ENCODE measurements at regions of chr11 and their contacts with region 1.

Region 1: GRCh38 chr11:6362873-6363678 is 27.2 kb upstream of the SMPD1 start:
- DNase-seq: peak; percentile 54
- H3K4me3 ChIP-seq: no peak overlapping the region
- H3K27ac ChIP-seq: no peak overlapping the region
- H3K27me3 ChIP-seq: no peaks in the 10 kb centered on the region
- CTCF ChIP-seq: peak; percentile 98

Region 2: GRCh38 chr11:5878564-5878963 is 484.5 kb before region 1 on chr11:
- CTCF ChIA-PET with region 1: no interaction called
- POLR2A ChIA-PET with region 1: no interaction called
- DNase-seq: no peak
- H3K4me3 ChIP-seq: no peak overlapping the region
- H3K27ac ChIP-seq: no peak overlapping the region
- H3K27me3 ChIP-seq: no peaks in the 10 kb centered on the region
- CTCF ChIP-seq: no peak

Region 3: GRCh38 chr11:5992604-5993251 is 370.3 kb before region 1 on chr11:
- CTCF ChIA-PET with region 1: interaction called, 30 read pairs
- POLR2A ChIA-PET with region 1: interaction called, 3 read pairs
- DNase-seq: no peak
- H3K4me3 ChIP-seq: no peak overlapping the region
- H3K27ac ChIP-seq: no peak overlapping the region
- H3K27me3 ChIP-seq: no peaks in the 10 kb centered on the region
- CTCF ChIP-seq: peak; percentile 48

Region 4: GRCh38 chr11:6240781-6241180 is 122.3 kb before region 1 on chr11:
- CTCF ChIA-PET with region 1: interaction called, 24 read pairs
- POLR2A ChIA-PET with region 1: no interaction called
- DNase-seq: no peak
- H3K4me3 ChIP-seq: no peak overlapping the region
- H3K27ac ChIP-seq: no peak overlapping the region
- H3K27me3 ChIP-seq: peaks cover 17% of the 10 kb centered on the region
- CTCF ChIP-seq: no peak

Region 5: DNA sequence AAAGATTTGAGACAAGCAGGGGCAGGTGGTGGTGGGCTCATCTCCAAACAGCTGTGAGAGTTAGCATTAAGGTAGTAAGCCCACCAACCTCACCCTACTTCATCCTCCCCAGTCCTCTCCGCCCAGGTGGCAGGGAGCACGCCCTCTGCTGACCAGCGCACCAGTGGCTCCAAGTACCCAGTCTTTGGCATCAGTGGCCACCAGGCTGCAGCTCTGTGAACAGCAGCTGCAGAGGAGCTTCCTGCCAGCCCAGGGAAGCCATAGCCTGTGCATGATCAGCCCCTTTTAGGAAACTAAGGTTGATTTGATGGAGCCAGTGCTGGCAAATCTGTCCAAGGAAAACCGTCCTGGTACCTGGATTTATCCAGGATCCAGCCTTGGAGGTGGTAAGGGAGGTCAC is 64.5 kb before region 1 on chr11:
- CTCF ChIA-PET with region 1: interaction called, 38 read pairs
- POLR2A ChIA-PET with region 1: no interaction called
- DNase-seq: no peak
- H3K4me3 ChIP-seq: no peak overlapping the region
- H3K27ac ChIP-seq: no peak overlapping the region
- H3K27me3 ChIP-seq: no peaks in the 10 kb centered on the region
- CTCF ChIP-seq: peak; percentile 53

Region 6: GRCh38 chr11:6321961-6322362 is 41.1 kb before region 1 on chr11:
- CTCF ChIA-PET with region 1: interaction called, 137 read pairs
- POLR2A ChIA-PET with region 1: interaction called, 8 read pairs
- DNase-seq: no peak
- H3K4me3 ChIP-seq: no peak overlapping the region
- H3K27ac ChIP-seq: peak overlapping the region; percentile 100
- H3K27me3 ChIP-seq: no peaks in the 10 kb centered on the region
- CTCF ChIP-seq: no peak

Region 7: DNA sequence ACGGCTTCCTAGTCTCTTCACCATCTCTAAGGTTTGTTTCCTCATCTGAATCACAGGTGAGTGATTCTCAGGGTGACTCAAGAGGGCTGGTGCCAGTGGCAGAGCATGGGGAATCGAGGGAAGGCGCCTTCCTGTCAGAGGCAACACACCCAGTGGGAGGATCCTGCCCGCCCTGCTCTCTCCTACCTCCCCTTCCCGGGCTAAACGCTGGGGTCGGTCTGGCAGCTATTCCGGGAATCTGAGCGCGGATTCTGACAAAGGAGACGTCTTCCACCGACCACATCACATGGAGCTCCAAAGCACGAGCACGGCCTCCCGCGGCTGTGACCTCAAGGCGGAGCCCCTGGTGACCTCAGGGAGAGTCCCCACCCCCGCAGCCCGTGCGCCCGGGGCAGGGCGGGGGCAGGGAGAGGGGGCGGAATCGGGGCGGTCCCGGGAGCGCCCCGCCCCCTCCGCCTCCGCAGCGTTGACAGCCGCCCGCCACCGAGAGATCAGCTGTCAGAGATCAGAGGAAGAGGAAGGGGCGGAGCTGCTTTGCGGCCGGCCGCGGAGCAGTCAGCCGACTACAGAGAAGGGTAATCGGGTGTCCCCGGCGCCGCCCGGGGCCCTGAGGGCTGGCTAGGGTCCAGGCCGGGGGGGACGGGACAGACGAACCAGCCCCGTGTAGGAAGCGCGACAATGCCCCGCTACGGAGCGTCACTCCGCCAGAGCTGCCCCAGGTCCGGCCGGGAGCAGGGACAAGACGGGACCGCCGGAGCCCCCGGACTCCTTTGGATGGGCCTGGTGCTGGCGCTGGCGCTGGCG is 27.0 kb after region 1 on chr11 and contains the start of gene SMPD1:
- CTCF ChIA-PET with region 1: interaction called, 25 read pairs
- POLR2A ChIA-PET with region 1: no interaction called
- DNase-seq: peak; percentile 58
- H3K4me3 ChIP-seq: peak within 1 kb of the TSS; percentile 84
- H3K27ac ChIP-seq: peak within 1 kb of the TSS; percentile 88
- H3K27me3 ChIP-seq: no peaks in the 10 kb centered on the region
- CTCF ChIP-seq: no peak
- polyA plus RNA-seq, gene SMPD1: 68.0 and 83.7 TPM in 2 replicates